Posterior cingulate gyrus (tissue), 11 donors: ENCODE measurements at regions of chr18 and their contacts with region 1.

Region 1: DNA sequence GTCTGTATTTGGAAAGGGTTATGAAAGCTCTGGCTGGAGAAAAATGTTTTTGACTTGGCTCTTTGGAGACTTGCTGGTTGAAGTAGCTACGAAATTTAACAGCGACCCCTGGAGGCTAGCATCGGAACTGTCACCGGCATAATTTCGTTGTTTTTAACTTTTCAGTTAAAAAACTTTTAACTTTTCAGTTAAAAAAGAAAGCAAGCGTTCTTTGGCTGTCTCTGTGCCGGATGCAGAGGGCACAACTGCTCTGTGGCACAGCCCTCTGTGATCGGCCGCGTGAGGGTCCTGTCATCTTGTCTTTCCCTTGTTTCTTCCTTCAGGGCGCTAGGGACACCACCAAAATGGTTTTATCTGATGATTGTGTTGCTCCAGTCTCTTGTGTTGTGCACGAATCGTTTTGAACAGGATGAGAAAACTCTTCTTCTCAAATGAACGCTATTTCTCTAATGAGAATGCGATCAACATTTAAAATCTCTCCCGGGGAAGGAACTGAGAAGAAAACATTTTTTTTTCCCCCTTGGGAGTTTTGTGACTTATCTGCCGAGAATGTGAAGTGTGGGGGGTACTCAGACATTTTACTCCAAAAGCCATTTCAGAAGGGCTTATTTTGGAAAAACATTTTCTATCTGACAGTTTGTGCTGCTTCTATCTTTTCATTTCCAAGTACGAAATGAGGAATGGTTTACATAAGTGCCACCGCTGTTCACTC is 57.1 kb downstream of the ADCYAP1 start:
- DNase-seq: peak in 6 of 10 donors; percentile 20 to 78 (median 48)

Region 2: DNA sequence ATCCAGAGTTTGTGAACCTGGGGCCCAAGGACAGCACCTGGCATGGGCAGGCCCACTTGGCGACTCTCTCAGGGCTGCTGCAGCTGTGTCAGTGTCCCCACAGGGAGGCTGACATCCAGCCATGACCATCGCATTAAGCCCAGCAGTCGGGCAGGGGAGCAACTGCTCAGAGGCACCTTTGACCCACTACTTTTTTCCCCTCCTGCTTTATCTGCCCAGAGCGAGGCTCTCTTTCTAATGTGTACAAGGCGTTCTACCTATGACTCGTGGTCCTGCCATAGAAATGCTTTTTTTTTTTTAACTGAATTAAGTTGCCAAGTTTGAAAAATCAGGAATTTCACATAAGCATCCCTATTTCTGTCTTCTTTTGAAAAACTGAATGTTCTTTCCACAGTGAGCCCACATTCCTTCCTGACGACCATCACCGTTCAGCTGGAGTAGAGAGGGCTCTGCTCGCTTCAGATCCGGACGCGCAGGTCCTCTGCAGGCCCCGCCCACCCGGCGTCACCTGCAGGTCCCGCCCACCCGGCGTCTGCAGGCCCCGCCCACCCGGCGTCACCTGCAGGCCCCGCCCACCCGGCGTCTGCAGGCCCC is 365.4 kb before region 1 on chr18:
- intact Hi-C with region 1: no loop called
- DNase-seq: peak in 7 of 10 donors; percentile 32 to 95 (median 56)

Region 3: DNA sequence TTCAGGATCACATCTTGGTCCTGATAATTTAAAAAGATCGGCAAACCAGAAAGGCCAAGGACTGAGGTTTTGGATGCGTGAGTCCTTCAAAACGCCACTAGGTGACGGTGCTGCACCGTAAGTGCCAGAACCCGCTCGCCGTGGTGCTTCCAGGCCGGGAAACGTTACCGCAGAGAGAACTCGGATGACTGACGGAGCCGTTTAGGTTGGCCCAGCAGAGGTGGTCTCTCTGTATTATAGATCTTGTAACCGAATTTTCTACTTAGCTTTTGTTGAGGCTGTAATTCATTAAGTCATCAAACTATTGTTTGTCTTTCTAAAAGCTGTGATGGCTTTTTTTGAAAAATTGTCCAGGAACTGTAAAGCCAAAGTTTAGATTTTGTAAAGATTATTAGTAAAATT is 96.9 kb before region 1 on chr18:
- intact Hi-C with region 1: loop called (anchors 1 kb)
- DNase-seq: peak; percentile 32 to 96 (median 74)